Brain microvascular endothelial cell (primary cell): ENCODE measurements at regions of chr1 and their contacts with region 1.

Region 1: DNA sequence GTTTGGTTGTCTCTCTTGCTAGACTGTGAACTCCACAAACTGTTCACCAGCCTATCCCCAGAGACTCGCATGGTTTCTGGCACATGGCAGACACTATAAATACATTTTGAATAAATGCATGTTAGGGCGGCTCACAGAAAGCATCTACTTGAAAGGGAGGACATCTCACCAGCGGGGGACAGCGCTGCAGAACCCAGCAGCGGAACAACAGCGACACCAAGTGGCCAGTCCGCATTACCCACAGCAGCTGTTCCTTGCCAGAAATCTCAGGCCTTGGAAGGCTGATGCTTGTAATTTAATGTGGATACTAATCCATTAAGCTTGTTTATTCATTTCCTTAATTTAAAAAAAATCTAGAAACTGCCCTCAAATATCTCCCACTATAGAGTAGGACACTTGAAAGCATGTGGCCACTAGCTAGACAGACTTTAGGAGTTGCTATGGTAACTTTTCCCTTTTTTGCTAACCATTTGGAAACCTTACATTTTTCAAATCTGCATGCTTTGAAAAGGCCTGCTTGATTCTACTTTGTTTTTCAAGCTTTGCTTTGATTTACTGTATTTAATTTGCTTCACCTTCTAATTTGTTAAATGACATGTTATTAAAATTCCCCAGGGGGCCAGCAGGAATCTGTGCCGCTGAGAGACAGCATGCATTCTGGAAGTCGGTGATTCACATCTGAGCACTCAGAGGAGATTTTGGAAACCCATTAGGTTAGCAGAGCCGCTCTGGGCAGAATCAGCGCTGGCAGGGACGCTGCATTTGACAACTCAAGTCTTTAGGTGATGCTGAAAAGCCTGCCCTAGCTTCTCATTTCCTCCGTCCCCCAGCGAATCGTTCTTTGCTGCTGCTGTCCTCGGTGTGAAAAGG is 63.5 kb upstream of the SSX2IP start:
- DNase-seq: peak; percentile 38
- H3K4me3 ChIP-seq: no peak overlapping the region
- H3K27ac ChIP-seq: no peak overlapping the region
- H3K27me3 ChIP-seq: peaks cover 3% of the 10 kb centered on the region
- CTCF ChIP-seq: peak; percentile 99

Region 2: DNA sequence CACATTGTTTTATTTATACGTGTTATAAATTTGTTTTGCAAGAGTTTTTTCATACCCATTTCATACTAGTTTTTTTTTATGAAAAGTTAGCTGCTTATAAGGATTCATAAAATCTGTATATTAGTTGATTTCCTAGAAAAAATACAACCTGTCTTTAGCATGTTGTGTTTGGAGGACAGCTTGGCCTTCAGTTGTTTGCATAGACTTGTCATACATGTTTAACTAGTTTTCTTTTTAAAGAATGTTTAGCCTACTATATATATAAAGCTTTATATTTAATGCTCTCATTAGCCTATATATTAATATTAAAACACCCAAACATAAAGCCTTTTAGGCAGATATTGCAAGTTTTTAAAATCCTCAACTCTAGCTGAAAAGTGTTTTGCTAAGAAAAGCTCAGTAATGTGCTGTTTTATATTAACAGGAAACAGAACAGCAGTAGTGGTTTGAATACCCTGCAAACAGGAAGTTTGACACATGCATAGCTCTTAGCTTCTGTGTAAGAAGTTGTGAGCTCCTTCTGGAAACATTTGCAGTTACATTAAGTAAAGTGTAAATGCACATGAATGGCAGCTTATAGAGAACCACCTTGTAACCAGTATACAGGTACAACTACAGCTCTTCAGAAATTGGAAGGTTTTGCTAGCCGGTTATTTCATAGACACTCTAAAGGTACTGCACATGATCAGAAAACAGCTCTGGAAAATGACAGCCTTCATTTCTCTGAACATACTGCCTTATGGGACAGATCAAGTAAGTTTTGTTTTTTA is 609.8 kb before region 1 on chr1 and contains the start of gene PRKACB:
- in situ Hi-C with region 1: loop called (anchors 25 kb)
- DNase-seq: peak; percentile 20
- H3K4me3 ChIP-seq: no peak within 1 kb of the TSS
- H3K27ac ChIP-seq: peak within 1 kb of the TSS; percentile 68
- H3K27me3 ChIP-seq: no peaks in the 10 kb centered on the region
- CTCF ChIP-seq: no peak

Region 3: GRCh38 chr1:84944767-84945486 is 191.2 kb after region 1 on chr1:
- in situ Hi-C with region 1: no loop called
- DNase-seq: peak; percentile 58
- H3K4me3 ChIP-seq: peak overlapping the region; percentile 32
- H3K27ac ChIP-seq: peak overlapping the region; percentile 18
- H3K27me3 ChIP-seq: peaks cover 10% of the 10 kb centered on the region
- CTCF ChIP-seq: peak; percentile 82

Region 4: DNA sequence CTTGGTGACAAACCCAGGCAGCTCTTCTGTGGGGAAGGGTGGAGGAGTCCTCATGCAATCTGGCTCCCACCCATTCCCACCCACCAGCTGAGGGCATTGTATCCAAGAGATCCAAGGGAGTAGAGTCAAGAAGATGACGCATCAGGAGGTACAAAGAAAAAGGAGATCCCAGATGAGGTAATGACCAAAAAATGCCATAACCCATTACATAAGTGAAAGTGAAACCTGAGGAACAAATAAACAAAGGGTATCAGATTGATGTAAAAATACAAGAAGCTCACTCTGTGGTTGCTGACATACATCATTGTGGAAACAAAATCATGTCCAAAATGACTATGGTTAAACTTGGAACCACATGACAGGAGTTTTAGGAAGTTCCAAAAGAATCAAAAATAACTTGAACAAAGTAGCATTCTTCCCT is 869.3 kb after region 1 on chr1:
- in situ Hi-C with region 1: no loop called
- DNase-seq: peak; percentile 90
- H3K4me3 ChIP-seq: no peak overlapping the region
- H3K27ac ChIP-seq: peak overlapping the region; percentile 81
- H3K27me3 ChIP-seq: no peaks in the 10 kb centered on the region
- CTCF ChIP-seq: no peak